CD8-positive, alpha-beta T cell (primary cell): ENCODE measurements at regions of chr1 and their contacts with region 1.

Region 1: DNA sequence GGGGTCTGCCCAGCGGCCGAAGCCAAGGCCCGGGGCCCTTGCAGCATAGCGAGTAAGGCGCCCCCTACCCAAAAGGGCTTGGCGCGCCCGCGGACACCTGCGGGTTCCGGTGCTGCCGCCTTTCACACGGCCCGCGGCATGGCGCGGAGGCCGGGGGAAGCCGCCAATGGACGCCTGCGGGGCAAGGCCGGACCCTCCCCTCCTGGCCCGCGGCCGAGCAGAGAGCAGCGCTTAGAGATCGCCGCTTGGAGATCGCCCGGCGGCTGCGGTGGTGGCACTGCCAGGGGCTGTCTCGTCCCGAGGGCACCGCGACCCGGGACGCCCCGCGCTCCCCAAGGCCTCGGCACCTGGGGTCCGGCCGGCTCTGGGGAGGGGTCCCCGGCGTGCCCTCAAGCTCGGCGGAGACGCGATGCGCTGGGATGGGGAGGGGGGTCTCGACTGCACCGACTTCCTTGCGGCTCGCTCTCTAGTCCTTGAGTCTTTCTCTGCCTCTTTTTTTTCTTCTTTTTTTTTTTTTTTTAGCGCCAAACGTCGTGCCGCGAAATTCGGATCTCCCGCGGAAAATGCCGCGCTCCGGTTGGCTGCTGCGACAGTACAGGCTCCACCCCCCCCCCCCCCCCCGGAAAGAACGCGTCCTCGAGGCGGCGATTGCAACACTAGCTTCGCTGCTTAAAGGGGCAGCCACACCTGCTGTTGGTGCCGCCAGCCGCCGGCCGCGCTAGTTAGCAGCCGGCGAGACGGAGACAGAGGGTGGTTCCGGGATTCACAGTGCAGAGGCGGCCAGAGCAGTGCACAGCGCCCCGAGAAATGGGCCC is at the start of gene E2F2:
- DNase-seq: peak; percentile 56 to 91 (median 82)
- ATAC-seq: peak; percentile 71
- H3K4me3 ChIP-seq: peak within 1 kb of the TSS; percentile 42 to 52
- H3K4me3 Mint-ChIP-seq: peak within 1 kb of the TSS; percentile 85
- H3K27ac ChIP-seq: peak within 1 kb of the TSS in 1 of 2 experiments; percentile 72
- H3K27ac Mint-ChIP-seq: peak within 1 kb of the TSS; percentile 13
- H3K4me1 ChIP-seq: peaks cover 60% of the 10 kb centered on the region
- H3K4me1 Mint-ChIP-seq: peaks cover 63% of the 10 kb centered on the region
- H3K27me3 ChIP-seq: no peaks in the 10 kb centered on the region
- H3K27me3 Mint-ChIP-seq: no peaks in the 10 kb centered on the region
- CTCF ChIP-seq: no peak
- total RNA-seq, gene E2F2: 0.19 to 0.38 TPM

Region 2: GRCh38 chr1:23514111-23514679 is 16.8 kb before region 1 on chr1:
- CTCF ChIA-PET with region 1: interaction called, 11 read pairs
- POLR2A ChIA-PET with region 1: interaction called, 11 read pairs
- intact Hi-C with region 1: no loop called
- DNase-seq: no peak
- ATAC-seq: no peak
- H3K4me3 ChIP-seq: no peak overlapping the region
- H3K4me3 Mint-ChIP-seq: no peak overlapping the region
- H3K27ac ChIP-seq: no peak overlapping the region
- H3K27ac Mint-ChIP-seq: no peak overlapping the region
- H3K4me1 ChIP-seq: no peaks in the 10 kb centered on the region
- H3K4me1 Mint-ChIP-seq: no peaks in the 10 kb centered on the region
- H3K27me3 ChIP-seq: no peaks in the 10 kb centered on the region
- H3K27me3 Mint-ChIP-seq: no peaks in the 10 kb centered on the region
- CTCF ChIP-seq: no peak

Region 3: GRCh38 chr1:25487628-25488027 is 1956.7 kb after region 1 on chr1:
- CTCF ChIA-PET with region 1: no interaction called
- POLR2A ChIA-PET with region 1: no interaction called
- intact Hi-C with region 1: no loop called
- DNase-seq: peak in 7 of 9 experiments; percentile 16 to 61 (median 55)
- ATAC-seq: peak; percentile 54
- H3K4me3 ChIP-seq: no peak overlapping the region
- H3K4me3 Mint-ChIP-seq: no peak overlapping the region
- H3K27ac ChIP-seq: no peak overlapping the region
- H3K27ac Mint-ChIP-seq: no peak overlapping the region
- H3K4me1 ChIP-seq: no peaks in the 10 kb centered on the region
- H3K4me1 Mint-ChIP-seq: peaks cover 12% of the 10 kb centered on the region
- H3K27me3 ChIP-seq: no peaks in the 10 kb centered on the region
- H3K27me3 Mint-ChIP-seq: no peaks in the 10 kb centered on the region
- CTCF ChIP-seq: peak; percentile 74